A549 (cell line): ENCODE measurements at regions of chr5 and their contacts with region 1.

Region 1: GRCh38 chr5:175444060-175444904 is at the start of gene DRD1:
- DNase-seq: peak; percentile 50 to 70
- ATAC-seq: peak; percentile 90 to 97
- H3K4me3 ChIP-seq: peak within 1 kb of the TSS; percentile 51
- H3K27ac ChIP-seq: peak within 1 kb of the TSS; percentile 72 to 87
- H3K4me1 ChIP-seq: peaks cover 16% of the 10 kb centered on the region; the same call in 1 of the 3 replicates
- CTCF ChIP-seq: peak; percentile 95
- EP300 ChIP-seq: no peak
- POLR2A ChIP-seq: no peak
- RAD21 ChIP-seq: peak; percentile 84 to 99
- polyA plus RNA-seq, gene DRD1: 5.7 and 6.6 TPM in 2 replicates

Region 2: GRCh38 chr5:175288048-175288621 is 156.1 kb before region 1 on chr5:
- CTCF ChIA-PET with region 1: interaction called, 15 read pairs
- POLR2A ChIA-PET with region 1: interaction called, 3 read pairs
- DNase-seq: peak; percentile 57 to 66
- ATAC-seq: peak; percentile 87 to 90
- H3K4me3 ChIP-seq: no peak overlapping the region
- H3K27ac ChIP-seq: peak overlapping the region; percentile 65 to 82; a peak in 5 of 6 replicates
- H3K4me1 ChIP-seq: peaks cover 31% of the 10 kb centered on the region
- CTCF ChIP-seq: no peak
- EP300 ChIP-seq: no peak
- POLR2A ChIP-seq: no peak
- RAD21 ChIP-seq: no peak

Region 3: GRCh38 chr5:175344331-175345195 is 99.7 kb before region 1 on chr5:
- CTCF ChIA-PET with region 1: interaction called, 13 read pairs
- POLR2A ChIA-PET with region 1: no interaction called
- DNase-seq: peak; percentile 40 to 82
- ATAC-seq: peak; percentile 83 to 85
- H3K4me3 ChIP-seq: no peak overlapping the region
- H3K27ac ChIP-seq: peak overlapping the region; percentile 77 to 88; a peak in 5 of 6 replicates
- H3K4me1 ChIP-seq: peaks cover 52% of the 10 kb centered on the region
- CTCF ChIP-seq: no peak
- EP300 ChIP-seq: peak; percentile 91 to 95; a peak in 4 of 5 replicates
- POLR2A ChIP-seq: no peak
- RAD21 ChIP-seq: peak; percentile 32 to 66

Region 4: GRCh38 chr5:175378444-175379028 is 65.7 kb before region 1 on chr5:
- CTCF ChIA-PET with region 1: interaction called, 14 read pairs
- POLR2A ChIA-PET with region 1: interaction called, 9 read pairs
- DNase-seq: peak; percentile 84 to 97
- ATAC-seq: peak; percentile 95 to 98
- H3K4me3 ChIP-seq: no peak overlapping the region
- H3K27ac ChIP-seq: peak overlapping the region; percentile 83 to 87
- H3K4me1 ChIP-seq: peaks cover 37% of the 10 kb centered on the region
- CTCF ChIP-seq: no peak
- EP300 ChIP-seq: peak; percentile 97 to 98
- POLR2A ChIP-seq: no peak
- RAD21 ChIP-seq: peak; percentile 34 to 72

Region 5: DNA sequence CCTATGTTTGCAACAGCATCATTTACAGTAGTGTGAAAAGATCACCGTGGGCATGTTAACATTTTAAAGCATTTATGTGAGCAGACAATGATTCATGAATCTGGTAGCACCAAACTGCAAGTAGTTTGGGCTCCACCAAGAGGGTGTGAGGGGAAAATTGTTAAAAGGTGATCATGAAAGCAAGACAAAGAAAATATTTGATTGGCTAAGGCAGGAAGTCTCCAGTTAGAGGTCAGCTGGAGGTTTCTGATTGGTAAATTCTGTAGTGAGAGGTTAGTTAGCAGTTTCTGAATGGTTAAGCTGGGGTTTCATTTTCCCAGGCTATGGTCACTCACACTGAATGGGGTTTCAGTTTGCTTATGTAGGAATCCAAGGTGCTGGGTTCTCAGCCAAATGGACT is 13.2 kb after region 1 on chr5:
- CTCF ChIA-PET with region 1: interaction called, 20 read pairs
- POLR2A ChIA-PET with region 1: no interaction called
- DNase-seq: peak in 1 of 2 experiments; percentile 33
- ATAC-seq: no peak
- H3K4me3 ChIP-seq: no peak overlapping the region
- H3K27ac ChIP-seq: no peak overlapping the region
- H3K4me1 ChIP-seq: no peaks in the 10 kb centered on the region
- CTCF ChIP-seq: no peak; the same call in 2 of the 3 replicates
- EP300 ChIP-seq: no peak
- POLR2A ChIP-seq: no peak
- RAD21 ChIP-seq: peak; percentile 42; a peak in 4 of 5 replicates